ENCODE measurements at regions of chr19 and their contacts with region 1.

Region 1: GRCh38 chr19:51514866-51515481 is 13.4 kb upstream of the SIGLEC12 start:
- DNase-seq: peak in 6 of 9 donors; percentile 2 to 48 (median 36)
- ATAC-seq: no peak
- H3K4me3 ChIP-seq: no peak overlapping the region
- H3K4me3 Mint-ChIP-seq: no peak overlapping the region
- H3K27ac ChIP-seq: no peak overlapping the region
- H3K27ac Mint-ChIP-seq: peak overlapping the region in 1 of 9 donors; percentile 27
- H3K4me1 ChIP-seq: no peaks in the 10 kb centered on the region
- H3K4me1 Mint-ChIP-seq: peaks cover 0 to under 1% (median 0%) of the 10 kb centered on the region in 7 donors
- H3K27me3 ChIP-seq: no peaks in the 10 kb centered on the region
- H3K27me3 Mint-ChIP-seq: peaks cover 28 to 60% (median 35%) of the 10 kb centered on the region in 5 donors

Region 2: GRCh38 chr19:51367565-51368365 is 147.2 kb before region 1 on chr19:
- CTCF ChIA-PET with region 1: no interaction called
- POLR2A ChIA-PET with region 1: no interaction called
- intact Hi-C with region 1: no loop called
- DNase-seq: peak; percentile 84 to 100 (median 90)
- ATAC-seq: peak; percentile 93
- H3K4me3 ChIP-seq: peak overlapping the region; percentile 96
- H3K4me3 Mint-ChIP-seq: peak overlapping the region; percentile 92 to 100 (median 98)
- H3K27ac ChIP-seq: peak overlapping the region; percentile 81
- H3K27ac Mint-ChIP-seq: peak overlapping the region; percentile 79 to 98 (median 95)
- H3K4me1 ChIP-seq: peaks cover 23 to 26% of the 10 kb centered on the region in 2 donors
- H3K4me1 Mint-ChIP-seq: peaks cover 53 to 81% (median 59%) of the 10 kb centered on the region in 7 donors
- H3K27me3 ChIP-seq: no peaks in the 10 kb centered on the region
- H3K27me3 Mint-ChIP-seq: no peaks in the 10 kb centered on the region

Region 3: DNA sequence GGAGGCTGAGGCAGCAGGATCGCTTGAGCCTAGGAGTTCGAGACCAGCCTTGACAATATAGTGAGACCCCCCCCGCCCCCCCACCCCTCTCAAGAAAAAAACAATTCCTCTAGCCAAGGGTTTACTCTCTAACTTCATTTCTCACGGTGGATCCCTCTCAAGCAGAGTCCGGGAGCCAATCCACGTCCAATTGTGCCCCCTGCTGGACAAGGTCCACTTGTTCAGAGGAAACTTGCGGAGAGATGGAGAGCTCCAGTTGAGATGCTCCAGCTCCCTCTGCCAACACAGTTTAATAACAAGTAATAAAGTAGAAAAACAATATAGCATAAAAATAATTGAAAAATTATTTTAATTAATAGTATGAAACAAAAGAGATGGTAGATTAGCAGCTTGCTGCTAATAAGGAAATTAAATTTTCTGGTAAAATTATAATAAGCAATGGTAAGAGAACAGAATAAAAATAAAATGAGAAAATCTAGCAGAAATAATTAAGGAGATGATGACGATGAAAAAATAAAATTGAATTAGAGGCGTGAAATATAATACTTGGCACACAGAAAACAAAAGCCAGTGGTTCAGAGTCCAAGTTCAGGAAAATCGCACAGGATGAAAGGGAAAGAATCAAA is 146.1 kb after region 1 on chr19:
- CTCF ChIA-PET with region 1: no interaction called
- POLR2A ChIA-PET with region 1: no interaction called
- intact Hi-C with region 1: loop called in 1 of 2 experiments (anchors 2 kb)
- DNase-seq: peak in 8 of 9 donors; percentile 7 to 52 (median 29)
- ATAC-seq: peak; percentile 60
- H3K4me3 ChIP-seq: no peak overlapping the region
- H3K4me3 Mint-ChIP-seq: no peak overlapping the region
- H3K27ac ChIP-seq: no peak overlapping the region
- H3K27ac Mint-ChIP-seq: no peak overlapping the region
- H3K4me1 ChIP-seq: no peaks in the 10 kb centered on the region
- H3K4me1 Mint-ChIP-seq: peaks cover 4 to 8% (median 7%) of the 10 kb centered on the region in 7 donors
- H3K27me3 ChIP-seq: peaks cover 0 to 6% of the 10 kb centered on the region in 2 donors
- H3K27me3 Mint-ChIP-seq: peaks cover 17 to 34% (median 28%) of the 10 kb centered on the region in 5 donors